Gastrocnemius medialis (tissue), 4 donors: ENCODE measurements at regions of chr20 and their contacts with region 1.

Region 1: DNA sequence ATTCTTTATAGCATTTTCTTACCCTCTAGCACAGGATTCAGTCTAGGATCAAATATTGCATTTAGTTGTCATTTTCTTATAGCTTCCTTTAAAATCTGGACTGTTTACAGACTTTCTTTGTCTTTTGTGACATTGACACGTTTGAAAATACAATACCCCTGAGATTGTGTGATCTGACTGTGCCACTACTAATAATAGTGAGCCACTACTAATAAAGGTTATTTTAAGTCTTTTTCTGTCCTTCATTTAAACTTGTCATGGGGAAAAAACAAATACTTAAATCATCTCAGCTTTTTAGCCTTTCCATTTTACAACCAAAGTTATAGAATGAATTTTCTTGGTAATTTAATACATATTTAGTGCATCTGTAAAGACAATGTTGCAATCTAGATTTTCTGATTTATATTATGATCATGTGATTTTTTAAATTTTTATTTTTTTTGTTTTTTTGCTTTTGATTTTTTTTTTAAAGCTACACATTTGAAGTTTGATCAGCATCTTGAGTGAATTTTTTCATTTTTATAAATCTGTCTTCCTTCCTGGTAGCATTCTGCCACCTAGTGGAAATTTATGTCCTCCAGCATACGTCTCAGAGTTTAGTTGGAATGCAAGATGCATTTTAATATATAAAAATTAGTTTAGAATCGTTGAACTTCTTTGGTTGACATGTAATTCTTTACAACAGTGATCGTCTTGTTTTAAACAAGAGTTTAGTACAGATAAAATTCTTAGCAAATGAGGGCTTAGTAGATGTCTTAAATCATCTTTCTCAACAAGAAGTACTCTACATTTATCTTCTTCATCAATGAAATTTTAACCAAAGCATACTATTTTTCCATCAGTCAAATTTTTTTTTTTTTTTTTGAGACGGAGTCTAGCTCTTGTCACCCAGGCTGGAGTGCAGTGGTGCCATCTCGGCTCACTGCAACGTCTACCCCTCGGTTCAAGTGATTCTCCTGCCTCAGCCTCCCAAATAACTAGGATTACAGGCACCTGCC is 119.4 kb downstream of the NCOA3 start:
- DNase-seq: no peak
- ATAC-seq: peak in 1 of 2 donors; percentile 53
- H3K4me3 ChIP-seq: no peak overlapping the region
- H3K27ac ChIP-seq: peak overlapping the region; percentile 19 to 40 (median 30)
- H3K4me1 ChIP-seq: peaks cover 13 to 25% of the 10 kb centered on the region in 2 donors
- H3K27me3 ChIP-seq: no peaks in the 10 kb centered on the region
- CTCF ChIP-seq: peak; percentile 61 to 92 (median 84)
- POLR2A ChIP-seq: no peak

Region 2: GRCh38 chr20:47196091-47197081 is 424.7 kb before region 1 on chr20:
- in situ Hi-C with region 1: loop called in 2 of 4 experiments (anchors 10 kb)
- intact Hi-C with region 1: no loop called
- DNase-seq: peak; percentile 13 to 45
- ATAC-seq: peak; percentile 47 to 66
- H3K4me3 ChIP-seq: no peak overlapping the region
- H3K27ac ChIP-seq: no peak overlapping the region
- H3K4me1 ChIP-seq: no peaks in the 10 kb centered on the region
- H3K27me3 ChIP-seq: no peaks in the 10 kb centered on the region
- CTCF ChIP-seq: peak; percentile 87 to 97 (median 91)
- POLR2A ChIP-seq: no peak

Region 3: DNA sequence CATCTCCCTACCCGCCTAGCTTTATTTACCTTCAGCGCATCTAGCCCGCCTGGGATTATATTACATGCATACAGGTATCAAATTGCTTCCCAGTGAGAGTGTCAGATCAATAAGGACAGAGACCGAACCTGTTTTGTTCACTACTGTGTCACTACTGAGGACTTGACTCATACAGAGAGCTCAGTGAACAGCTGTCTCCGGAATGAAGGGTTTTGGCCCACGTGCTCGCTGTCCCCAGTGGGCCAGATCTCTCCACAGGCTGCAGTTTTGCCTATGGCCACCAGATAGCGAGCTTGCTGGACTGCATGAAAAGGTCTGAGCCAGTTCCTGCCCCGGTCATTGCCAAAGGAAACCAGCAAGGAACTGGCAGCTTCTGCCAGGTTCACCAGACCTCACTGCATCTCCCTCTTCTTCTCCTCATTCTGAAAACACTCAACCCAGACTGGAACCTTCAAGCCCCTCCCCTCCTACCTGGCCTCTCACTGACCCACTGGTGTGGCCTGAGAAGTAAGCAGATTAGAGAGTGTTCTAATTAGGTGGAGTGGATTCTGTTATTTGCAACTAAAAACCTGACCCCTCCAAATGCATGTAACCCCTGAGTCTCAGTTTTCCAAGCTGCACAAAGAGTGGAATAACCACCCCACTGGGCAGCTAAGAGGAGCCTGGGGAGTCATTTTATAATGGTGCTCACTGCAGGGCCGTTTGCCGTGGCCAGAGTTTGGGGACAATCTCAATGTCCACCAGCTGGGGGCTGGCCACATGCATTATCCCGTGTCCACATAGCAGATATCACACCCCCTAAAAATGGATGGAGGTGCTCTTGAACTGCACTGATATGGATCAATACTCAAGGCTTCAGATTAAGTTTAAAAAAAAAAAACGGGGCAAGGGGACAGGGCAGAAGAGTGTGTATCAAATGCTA is 415.3 kb before region 1 on chr20:
- in situ Hi-C with region 1: no loop called
- intact Hi-C with region 1: loop called (anchors 2 kb)
- DNase-seq: peak; percentile 59 to 84
- ATAC-seq: peak; percentile 91 to 93
- H3K4me3 ChIP-seq: no peak overlapping the region
- H3K27ac ChIP-seq: peak overlapping the region in 1 of 4 donors; percentile 47
- H3K4me1 ChIP-seq: peaks cover 0 to 3% of the 10 kb centered on the region in 2 donors
- H3K27me3 ChIP-seq: no peaks in the 10 kb centered on the region
- CTCF ChIP-seq: peak; percentile 62 to 74 (median 66)
- POLR2A ChIP-seq: no peak

Region 4: GRCh38 chr20:47272893-47273590 is 348.1 kb before region 1 on chr20:
- in situ Hi-C with region 1: loop called (anchors 10 to 25 kb)
- intact Hi-C with region 1: loop called (anchors 5 kb)
- DNase-seq: peak in 1 of 2 donors; percentile 23
- ATAC-seq: peak; percentile 69 to 78
- H3K4me3 ChIP-seq: no peak overlapping the region
- H3K27ac ChIP-seq: peak overlapping the region; percentile 63 to 80 (median 78)
- H3K4me1 ChIP-seq: peaks cover 32 to 37% of the 10 kb centered on the region in 2 donors
- H3K27me3 ChIP-seq: no peaks in the 10 kb centered on the region
- CTCF ChIP-seq: peak; percentile 88 to 95 (median 93)
- POLR2A ChIP-seq: no peak

Region 5: DNA sequence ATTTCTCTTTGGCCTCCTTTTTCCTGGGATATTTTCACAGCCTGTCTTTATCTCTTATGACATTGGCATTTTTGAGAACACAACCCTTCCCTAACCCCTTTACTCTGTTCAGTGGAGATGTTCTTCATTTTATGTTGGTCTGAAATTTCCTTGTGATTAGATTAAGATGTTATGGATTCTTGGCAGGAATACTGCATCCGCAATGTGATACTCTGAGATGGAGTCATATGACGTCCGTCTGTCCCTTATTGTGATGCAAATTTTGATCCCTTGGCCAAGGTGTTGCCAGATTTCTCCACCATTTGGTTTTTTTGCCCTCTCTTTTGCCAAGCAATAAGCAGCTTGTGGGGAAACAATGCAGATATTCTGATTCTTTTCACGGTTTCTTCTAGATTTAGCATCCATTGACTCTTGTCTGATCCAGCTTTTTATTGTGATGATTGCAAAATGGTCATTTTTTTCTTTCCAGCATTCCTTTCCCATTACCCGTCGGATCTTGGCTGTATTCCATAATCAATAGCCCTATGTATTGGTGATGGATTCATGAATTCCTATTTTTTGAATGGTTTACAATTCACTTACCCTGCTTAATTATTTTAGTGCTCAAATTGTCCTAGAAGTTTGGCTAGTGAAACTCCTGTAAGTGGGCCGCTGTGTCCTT is 34.3 kb before region 1 on chr20:
- in situ Hi-C with region 1: no loop called
- intact Hi-C with region 1: no loop called
- DNase-seq: no peak
- ATAC-seq: no peak
- H3K4me3 ChIP-seq: no peak overlapping the region
- H3K27ac ChIP-seq: peak overlapping the region in 3 of 4 donors; percentile 12 to 33 (median 25)
- H3K4me1 ChIP-seq: peaks cover 6 to 30% of the 10 kb centered on the region in 2 donors
- H3K27me3 ChIP-seq: no peaks in the 10 kb centered on the region
- CTCF ChIP-seq: no peak
- POLR2A ChIP-seq: no peak